ENCODE measurements at regions of chr12 and their contacts with region 1.

Region 1: DNA sequence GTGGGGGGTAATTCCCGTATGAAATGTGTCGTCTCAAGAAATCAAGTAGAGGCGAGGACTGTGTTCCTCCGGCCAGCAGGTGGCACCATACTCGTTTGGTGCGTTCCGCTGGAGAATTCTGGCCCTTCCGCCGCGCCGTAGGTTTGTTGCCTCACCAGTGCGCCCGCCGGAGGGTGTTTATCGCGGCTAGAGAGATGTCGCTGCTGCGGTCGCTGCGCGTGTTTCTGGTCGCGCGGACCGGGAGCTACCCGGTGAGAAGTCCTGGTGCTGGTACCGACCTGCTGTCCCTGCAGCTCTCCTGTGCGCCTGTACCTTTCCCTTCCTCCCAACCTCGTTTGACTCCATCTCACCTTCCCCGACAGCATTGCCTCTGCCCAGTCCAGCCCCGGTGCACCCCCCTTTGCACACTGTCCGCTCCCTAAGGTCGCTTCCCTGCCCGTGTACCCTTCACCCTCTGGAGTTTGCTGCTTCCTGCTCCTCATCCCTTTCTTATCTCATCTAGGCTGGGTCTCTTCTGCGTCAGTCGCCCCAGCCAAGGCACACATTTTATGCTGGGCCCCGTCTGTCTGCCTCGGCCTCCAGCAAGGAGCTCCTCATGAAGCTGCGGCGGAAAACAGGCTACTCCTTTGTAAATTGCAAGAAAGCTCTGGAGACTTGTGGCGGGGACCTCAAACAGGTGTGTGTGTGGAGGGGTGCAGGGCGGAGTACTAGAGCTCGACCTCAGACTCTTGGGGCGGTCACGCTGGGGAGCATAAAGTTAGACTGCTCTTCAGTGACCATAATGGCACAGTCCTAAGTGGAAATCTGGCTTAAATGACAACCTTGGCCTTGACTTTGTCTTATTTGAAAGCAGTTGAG is at the start of gene TSFM:
- DNase-seq: peak; percentile 95
- H3K4me3 Mint-ChIP-seq: peak within 1 kb of the TSS; percentile 98
- H3K27ac Mint-ChIP-seq: peak within 1 kb of the TSS; percentile 86
- H3K4me1 Mint-ChIP-seq: peaks cover 25% of the 10 kb centered on the region
- H3K27me3 Mint-ChIP-seq: no peaks in the 10 kb centered on the region
- CTCF ChIP-seq: peak; percentile 90
- total RNA-seq, gene TSFM: 28.4 and 32.6 TPM in 2 replicates

Region 2: DNA sequence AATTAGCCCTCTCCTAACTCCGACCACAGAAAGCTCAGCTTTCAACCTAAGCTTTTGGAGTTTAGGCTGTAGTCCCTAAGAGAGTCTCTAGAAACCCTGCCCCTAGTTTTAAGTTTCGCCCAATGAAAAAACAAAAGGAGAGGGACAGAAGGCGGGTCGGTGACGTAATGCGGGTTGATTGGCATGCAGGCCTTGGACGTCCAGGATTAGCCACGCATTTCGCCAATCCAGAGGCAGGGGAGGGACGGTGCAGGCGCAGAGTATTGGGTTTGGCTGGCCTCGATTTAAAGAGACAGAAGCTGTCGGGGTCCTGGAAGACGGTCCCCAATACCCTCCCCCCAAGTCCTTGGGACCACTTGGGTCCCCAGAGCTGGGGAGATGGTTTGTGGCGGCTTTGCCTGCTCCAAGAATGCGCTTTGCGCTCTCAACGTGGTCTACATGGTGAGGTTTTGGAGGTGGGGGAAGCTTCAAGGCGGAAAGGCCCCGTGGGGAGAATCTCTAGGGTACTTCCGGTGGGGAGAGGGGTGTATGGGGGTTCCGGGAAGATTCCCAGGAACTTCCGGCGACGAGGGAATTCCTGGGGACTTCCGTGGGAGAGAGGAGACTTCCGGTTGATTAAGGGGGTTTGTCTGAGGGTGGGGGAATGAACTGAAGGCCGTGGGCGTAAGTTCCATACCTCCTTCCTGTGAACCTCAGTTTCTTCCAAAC is 37.9 kb before region 1 on chr12 and contains the start of gene TSPAN31:
- CTCF ChIA-PET with region 1: no interaction called
- POLR2A ChIA-PET with region 1: no interaction called
- intact Hi-C with region 1: no loop called
- DNase-seq: peak; percentile 99
- H3K4me3 Mint-ChIP-seq: peak within 1 kb of the TSS; percentile 100
- H3K27ac Mint-ChIP-seq: peak within 1 kb of the TSS; percentile 100
- H3K4me1 Mint-ChIP-seq: peaks cover 11% of the 10 kb centered on the region
- H3K27me3 Mint-ChIP-seq: peaks cover 16% of the 10 kb centered on the region
- CTCF ChIP-seq: no peak
- total RNA-seq, gene TSPAN31: 24.8 and 30.9 TPM in 2 replicates

Region 3: DNA sequence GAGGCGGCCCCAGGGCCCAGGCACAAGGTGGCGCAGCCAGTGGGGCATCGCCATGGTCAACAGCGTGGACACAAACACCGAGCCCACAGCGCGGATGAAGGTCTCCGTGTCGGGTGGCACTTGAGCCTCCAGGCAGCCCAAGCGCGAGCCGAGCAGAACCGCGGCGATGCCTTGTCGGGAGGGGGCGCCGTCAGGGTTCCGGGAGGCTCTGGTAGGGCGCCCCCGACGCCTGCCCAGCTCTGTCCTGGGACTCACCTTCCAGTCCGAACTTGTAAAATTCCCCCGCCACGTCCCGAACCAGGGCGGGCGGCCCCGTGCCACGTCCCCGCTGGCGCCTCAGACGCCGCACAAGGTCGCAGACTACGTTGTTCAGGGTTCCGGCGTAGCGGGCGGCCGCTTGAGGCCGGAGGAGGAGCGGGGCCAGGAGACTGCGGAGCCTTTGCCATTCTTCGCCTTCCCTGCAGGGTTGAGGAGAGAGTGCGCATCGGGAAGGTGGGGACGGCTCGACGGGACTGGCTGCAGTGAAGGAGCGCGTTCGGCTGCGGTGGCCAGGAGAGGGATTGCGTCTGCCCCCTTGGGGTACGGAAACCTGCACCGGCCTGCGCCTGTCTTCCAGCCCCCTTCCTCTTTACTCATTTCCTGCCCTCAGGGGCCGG is 17.7 kb before region 1 on chr12:
- CTCF ChIA-PET with region 1: interaction called, 11 read pairs
- POLR2A ChIA-PET with region 1: interaction called, 8 read pairs
- intact Hi-C with region 1: no loop called
- DNase-seq: peak; percentile 73
- H3K4me3 Mint-ChIP-seq: peak overlapping the region; percentile 89
- H3K27ac Mint-ChIP-seq: peak overlapping the region; percentile 89
- H3K4me1 Mint-ChIP-seq: peaks cover 26% of the 10 kb centered on the region
- H3K27me3 Mint-ChIP-seq: no peaks in the 10 kb centered on the region
- CTCF ChIP-seq: peak; percentile 35

Region 4: DNA sequence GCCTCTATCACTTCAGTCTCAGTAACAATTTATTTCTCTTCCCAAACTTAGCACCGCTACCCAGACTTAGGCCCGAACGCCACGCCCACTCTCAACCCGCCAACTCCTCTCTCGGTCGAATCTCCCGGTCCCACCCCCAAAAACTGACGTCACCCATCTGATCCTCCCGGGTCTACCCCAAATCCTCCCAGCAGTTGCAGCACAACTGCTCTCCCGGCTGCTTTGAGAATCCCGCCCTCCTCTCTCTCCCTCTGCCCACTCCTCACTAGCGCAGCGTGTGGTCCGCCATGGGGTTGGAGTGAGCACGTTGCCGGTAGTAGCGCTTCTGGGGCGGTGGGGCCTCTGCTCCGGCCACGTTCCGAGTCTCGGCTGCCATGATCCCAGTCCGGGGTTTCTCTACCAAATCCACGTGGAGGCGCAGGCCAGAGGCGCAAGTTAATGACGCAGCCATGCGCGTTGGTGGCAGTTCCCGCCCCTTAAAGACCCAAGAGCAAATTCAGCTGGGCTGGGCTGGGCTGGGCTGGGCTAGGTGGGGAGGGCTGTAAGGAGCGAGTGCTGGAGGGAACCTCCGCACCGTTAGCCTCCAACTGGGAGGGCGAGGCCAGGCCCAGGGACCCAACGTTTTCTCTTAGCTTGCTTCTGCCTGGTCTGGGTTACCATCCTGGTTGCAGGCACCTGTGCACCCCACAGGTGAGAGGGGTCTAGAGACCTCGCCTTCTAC is 11.0 kb before region 1 on chr12 and contains the start of gene METTL1:
- CTCF ChIA-PET with region 1: interaction called, 11 read pairs
- POLR2A ChIA-PET with region 1: interaction called, 39 read pairs
- intact Hi-C with region 1: no loop called
- DNase-seq: peak; percentile 97
- H3K4me3 Mint-ChIP-seq: peak within 1 kb of the TSS; percentile 99
- H3K27ac Mint-ChIP-seq: peak within 1 kb of the TSS; percentile 100
- H3K4me1 Mint-ChIP-seq: peaks cover 33% of the 10 kb centered on the region
- H3K27me3 Mint-ChIP-seq: no peaks in the 10 kb centered on the region
- CTCF ChIP-seq: no peak
- total RNA-seq, gene METTL1: 26.2 and 40.6 TPM in 2 replicates

Region 5: DNA sequence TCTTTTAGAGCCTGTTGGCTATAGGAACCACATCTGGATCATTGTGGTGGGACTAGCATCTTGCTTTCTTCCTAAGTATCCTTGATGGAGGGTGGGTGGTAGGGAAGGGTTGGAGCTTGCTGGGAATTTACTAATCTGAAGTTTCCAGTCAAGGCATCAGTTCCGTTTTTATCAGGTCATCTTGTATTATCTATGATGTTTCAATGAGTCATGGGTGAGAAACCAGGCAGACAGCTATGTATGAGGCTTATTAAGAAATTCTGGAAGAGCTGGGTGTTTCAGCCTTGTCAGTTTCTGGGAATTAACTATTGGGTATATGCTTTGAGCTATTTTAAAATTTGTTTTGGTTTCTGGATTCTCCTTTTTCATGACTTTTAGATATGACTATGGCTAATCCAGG is 11.1 kb after region 1 on chr12:
- CTCF ChIA-PET with region 1: interaction called, 15 read pairs
- POLR2A ChIA-PET with region 1: interaction called, 33 read pairs
- intact Hi-C with region 1: no loop called
- DNase-seq: peak; percentile 74
- H3K4me3 Mint-ChIP-seq: no peak overlapping the region
- H3K27ac Mint-ChIP-seq: no peak overlapping the region
- H3K4me1 Mint-ChIP-seq: peaks cover 9% of the 10 kb centered on the region
- H3K27me3 Mint-ChIP-seq: no peaks in the 10 kb centered on the region
- CTCF ChIP-seq: no peak

Region 6: GRCh38 chr12:57803319-57803893 is 20.6 kb after region 1 on chr12:
- CTCF ChIA-PET with region 1: interaction called, 11 read pairs
- POLR2A ChIA-PET with region 1: interaction called, 6 read pairs
- intact Hi-C with region 1: no loop called
- DNase-seq: peak; percentile 61
- H3K4me3 Mint-ChIP-seq: no peak overlapping the region
- H3K27ac Mint-ChIP-seq: no peak overlapping the region
- H3K4me1 Mint-ChIP-seq: no peaks in the 10 kb centered on the region
- H3K27me3 Mint-ChIP-seq: no peaks in the 10 kb centered on the region
- CTCF ChIP-seq: peak; percentile 84

Region 7: GRCh38 chr12:57993025-57993424 is 210.2 kb after region 1 on chr12:
- CTCF ChIA-PET with region 1: no interaction called
- POLR2A ChIA-PET with region 1: no interaction called
- intact Hi-C with region 1: no loop called
- DNase-seq: peak; percentile 15
- H3K4me3 Mint-ChIP-seq: no peak overlapping the region
- H3K27ac Mint-ChIP-seq: no peak overlapping the region
- H3K4me1 Mint-ChIP-seq: peaks cover 7% of the 10 kb centered on the region
- H3K27me3 Mint-ChIP-seq: no peaks in the 10 kb centered on the region
- CTCF ChIP-seq: no peak

Measured in MCF 10A (cell line).